ENCODE measurements at regions of chr10 and their contacts with region 1.

Region 1: DNA sequence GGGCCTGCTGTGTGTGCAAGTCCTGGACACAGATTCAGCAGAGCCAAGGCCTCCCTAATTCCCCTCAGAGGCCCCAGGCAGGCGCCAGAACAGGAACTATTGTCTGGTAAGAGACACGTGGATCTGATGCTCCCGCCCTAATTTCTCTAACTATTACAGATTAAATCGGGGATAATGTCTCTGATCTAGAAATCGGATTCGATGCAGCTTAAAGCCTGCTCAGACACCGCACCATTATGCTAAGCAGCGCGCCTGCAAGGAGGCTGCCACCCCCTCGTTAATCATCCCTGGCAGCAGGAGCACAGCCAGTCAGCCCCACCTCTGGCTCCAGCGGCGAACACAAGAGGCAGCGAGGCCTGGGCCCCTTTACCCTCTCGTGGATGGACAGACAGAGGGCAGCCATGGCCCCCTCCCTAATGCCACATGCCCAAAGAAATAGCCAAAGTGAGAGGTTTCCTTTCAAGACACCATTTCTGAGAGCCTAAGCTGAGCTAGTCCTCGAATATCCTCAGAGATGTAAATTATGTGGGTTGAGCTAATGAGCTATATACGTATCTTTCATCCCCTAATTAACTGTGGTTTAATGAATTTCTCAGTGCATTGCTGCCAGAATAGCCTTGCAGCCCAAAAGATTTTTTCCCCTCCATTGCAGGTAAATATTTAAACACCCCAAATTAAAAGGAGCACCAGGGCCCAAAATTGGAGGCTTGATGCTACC is 122.1 kb downstream of the GRID1 start:
- DNase-seq: no peak
- ATAC-seq: no peak

Region 2: DNA sequence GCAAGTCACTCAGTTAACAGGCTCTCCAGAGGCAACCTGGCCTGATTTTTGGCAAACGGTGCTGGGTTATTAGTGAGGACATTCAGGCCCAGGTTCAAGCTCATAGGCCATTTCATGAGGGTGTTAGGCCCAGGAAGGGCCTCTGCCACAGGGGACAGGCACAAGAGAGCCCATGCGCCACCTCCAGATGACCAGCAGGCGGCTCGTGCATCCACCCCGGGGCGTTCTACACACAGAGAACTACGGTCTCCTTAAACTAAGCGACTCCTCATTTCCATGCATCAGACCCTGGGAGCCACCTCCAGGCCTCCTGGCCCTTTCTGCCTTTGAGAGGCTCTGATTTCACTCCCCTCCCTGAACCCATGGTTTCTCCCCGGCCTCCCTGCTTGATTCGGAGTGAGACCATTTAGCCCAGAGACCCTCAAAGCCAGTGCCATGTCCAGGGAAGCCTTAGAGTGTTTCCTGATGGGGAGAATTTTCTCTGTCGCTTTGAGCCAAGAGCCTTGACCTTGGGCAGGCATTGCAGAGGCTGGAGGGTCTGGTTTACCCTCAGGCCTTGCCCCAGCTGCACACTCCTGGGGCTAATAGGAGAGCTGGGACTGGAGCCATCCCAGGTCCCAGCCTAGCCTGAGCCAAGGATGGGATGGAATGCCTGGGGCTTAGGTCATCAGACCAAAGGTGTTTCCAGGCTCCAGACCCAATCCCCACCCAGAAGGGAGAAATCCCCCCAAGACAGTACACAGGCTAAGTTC is 65.9 kb before region 1 on chr10:
- intact Hi-C with region 1: loop called (anchors 2 kb)
- DNase-seq: no peak
- ATAC-seq: peak; percentile 34

Region 3: DNA sequence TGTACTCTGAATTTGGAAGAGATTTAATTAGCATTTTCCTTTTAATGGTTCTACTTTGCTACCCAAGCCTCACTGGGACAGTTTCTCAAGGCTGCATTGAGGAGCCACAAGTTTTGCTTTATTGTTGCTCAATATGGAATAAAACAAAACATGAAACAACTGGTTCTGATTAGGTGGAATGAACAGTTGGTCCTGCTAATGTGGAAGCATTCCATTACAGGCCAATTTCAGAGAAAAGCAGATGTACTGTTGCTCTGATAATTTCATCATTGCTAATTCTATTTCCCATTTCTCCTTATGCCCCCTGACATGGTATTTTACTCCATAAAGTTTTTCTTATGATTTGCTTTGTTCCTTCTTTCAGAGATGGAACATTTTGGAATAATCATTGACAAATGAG is 1349.2 kb after region 1 on chr10:
- intact Hi-C with region 1: no loop called
- DNase-seq: no peak
- ATAC-seq: peak; percentile 93